Left ventricle myocardium inferior (tissue), 1 donor: ENCODE measurements at regions of chr6 and their contacts with region 1.

Region 1: DNA sequence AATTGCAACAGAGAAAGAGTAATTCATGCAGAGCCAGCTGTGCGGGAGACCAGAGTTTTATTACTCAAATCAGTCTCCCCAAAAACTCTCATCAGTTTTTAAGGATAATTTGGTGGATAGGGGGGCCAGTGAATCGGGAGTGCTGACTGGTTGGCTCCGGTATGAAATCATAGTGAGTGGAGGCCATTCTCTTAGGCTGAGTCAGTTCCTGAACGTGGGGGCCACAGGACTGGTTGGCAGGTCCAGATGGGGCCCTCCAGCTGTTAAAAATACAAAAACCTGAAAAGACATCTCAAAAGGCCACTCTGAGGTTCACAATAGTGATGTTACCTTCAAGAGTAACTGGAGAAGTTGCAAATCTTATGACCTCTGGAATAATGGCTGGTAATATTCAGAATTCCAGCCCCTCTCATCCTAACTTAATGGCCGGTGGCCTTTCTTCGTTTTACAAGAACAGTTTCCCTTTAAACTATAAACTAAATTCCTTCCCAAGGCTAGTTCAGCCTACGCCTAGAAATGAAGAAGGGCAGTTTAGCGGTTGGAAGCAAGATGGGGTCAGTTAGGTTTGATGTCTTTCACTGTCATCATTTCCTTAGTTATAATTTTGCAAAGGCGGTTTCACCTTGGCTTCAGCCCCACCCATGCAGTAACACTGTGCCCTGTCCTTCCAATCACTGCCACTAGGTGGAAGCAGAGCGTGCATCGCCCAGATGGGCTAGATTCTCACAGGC is 6.8 kb upstream of the MICA start:
- DNase-seq: peak; percentile 81
- H3K4me3 ChIP-seq: no peak overlapping the region
- H3K27ac ChIP-seq: no peak overlapping the region
- H3K4me1 ChIP-seq: peaks cover 49% of the 10 kb centered on the region
- H3K27me3 ChIP-seq: no peaks in the 10 kb centered on the region
- CTCF ChIP-seq: peak; percentile 97

Region 2: DNA sequence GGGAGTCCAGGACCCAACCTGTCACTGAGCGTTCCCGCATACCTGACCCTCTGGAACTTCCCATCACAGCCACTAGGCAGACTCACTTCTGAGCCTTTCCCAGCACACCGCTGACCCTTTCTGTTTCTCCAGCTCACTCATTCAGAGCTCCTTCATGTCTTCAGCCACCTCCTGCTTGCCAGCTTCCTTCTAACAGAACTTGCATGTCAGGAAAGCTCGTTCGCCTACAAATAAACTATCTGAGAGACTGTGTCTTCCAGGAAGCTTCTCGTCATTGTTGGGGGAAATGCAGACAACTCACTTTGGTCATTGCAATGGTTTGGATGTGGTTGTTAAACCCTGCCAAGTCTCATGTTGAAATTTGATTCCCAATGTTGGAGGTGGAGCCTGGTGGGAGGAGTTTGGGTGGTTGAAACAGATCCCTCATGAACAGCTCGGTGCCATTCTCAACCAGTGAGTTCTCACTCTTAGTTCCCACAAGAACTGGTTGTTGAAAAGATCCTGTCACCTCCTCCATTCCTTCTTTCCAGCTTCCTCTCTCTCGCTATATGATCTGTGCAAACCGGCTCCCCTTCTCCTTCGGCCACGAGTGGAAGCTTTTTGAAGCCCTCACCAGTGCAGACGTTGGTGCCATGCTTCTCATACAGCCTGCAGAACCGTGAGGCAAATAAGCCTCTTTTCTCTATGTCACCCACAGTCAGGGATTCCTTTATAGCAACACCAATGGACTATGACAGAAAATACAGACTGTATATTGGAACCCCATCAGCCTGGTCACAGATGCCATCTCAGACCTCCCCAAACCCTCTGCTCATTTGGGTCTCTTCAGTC is 414.4 kb before region 1 on chr6:
- intact Hi-C with region 1: no loop called
- DNase-seq: no peak
- H3K4me3 ChIP-seq: peak overlapping the region; percentile 44
- H3K27ac ChIP-seq: no peak overlapping the region
- H3K4me1 ChIP-seq: peaks cover 11% of the 10 kb centered on the region
- H3K27me3 ChIP-seq: peaks cover 12% of the 10 kb centered on the region
- CTCF ChIP-seq: peak; percentile 28

Region 3: GRCh38 chr6:31441365-31442267 is 45.0 kb after region 1 on chr6:
- intact Hi-C with region 1: loop called (anchors 2 kb)
- DNase-seq: peak; percentile 84
- H3K4me3 ChIP-seq: peak overlapping the region; percentile 48
- H3K27ac ChIP-seq: no peak overlapping the region
- H3K4me1 ChIP-seq: peaks cover 8% of the 10 kb centered on the region
- H3K27me3 ChIP-seq: peaks cover 19% of the 10 kb centered on the region
- CTCF ChIP-seq: peak; percentile 89